Activated CD4-positive, alpha-beta T cell treated with anti-CD3 and anti-CD28 coated beads, Interleukin-2, amount 10 ng/mL, durations not matched to agents 24 days and 14 days (primary cell): ENCODE measurements at regions of chr21 and their contacts with region 1.

Region 1: DNA sequence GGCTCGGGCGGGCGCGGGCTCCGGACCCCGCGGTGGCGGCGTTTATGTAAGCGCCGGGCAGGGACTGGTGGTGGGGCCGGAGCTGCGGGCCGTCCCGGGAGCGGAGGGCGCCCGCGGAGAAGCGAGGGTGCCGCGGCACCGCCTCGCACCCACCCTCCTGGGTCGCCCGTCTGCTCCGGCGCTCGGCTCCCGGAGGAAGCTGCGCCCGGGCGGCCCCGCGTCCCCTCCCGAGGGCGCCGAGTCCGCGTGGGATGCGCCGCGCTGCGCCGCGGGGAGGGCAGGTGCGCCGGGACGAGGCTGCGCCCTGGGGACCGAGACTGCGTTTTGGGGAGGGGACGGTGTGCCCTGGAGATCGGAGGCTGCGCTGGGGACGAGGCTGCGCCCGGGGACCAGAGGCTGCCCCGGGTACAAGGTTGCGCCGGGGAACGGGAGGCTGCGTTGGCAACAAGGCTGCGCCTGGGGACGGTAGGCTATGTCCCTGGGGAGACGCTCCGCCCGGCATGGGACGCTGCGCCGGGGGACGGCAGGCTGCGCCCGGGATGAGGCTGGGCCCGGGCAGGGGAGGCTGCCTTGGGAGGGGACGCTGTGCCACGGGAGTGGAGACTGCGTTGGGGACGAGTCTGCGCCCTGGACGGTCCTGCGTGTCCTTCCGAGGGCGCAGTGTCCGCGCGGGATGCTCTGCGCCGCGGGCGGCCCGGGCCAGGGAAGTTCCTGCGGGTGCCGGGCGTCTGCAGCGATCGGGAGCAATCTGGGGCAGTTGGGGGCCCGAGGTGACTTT is 627 bp downstream of the ADARB1 start:
- DNase-seq: peak; percentile 79
- H3K4me3 Mint-ChIP-seq: peak overlapping the region; percentile 83
- H3K27ac Mint-ChIP-seq: peak overlapping the region; percentile 84
- H3K4me1 Mint-ChIP-seq: peaks cover 47% of the 10 kb centered on the region
- H3K27me3 Mint-ChIP-seq: peaks cover 3% of the 10 kb centered on the region

Region 2: GRCh38 chr21:44939532-44940115 is 135.4 kb before region 1 on chr21 and contains the start of gene SLX9:
- intact Hi-C with region 1: loop called (anchors 5 kb)
- DNase-seq: peak; percentile 95
- H3K4me3 Mint-ChIP-seq: peak within 1 kb of the TSS; percentile 98
- H3K27ac Mint-ChIP-seq: peak within 1 kb of the TSS; percentile 86
- H3K4me1 Mint-ChIP-seq: peaks cover 30% of the 10 kb centered on the region
- H3K27me3 Mint-ChIP-seq: no peaks in the 10 kb centered on the region
- total RNA-seq, gene SLX9: 74.6 and 80.8 TPM in 2 replicates

Region 3: GRCh38 chr21:44989537-44989886 is 85.5 kb before region 1 on chr21:
- intact Hi-C with region 1: no loop called
- DNase-seq: no peak
- H3K4me3 Mint-ChIP-seq: no peak overlapping the region
- H3K27ac Mint-ChIP-seq: no peak overlapping the region
- H3K4me1 Mint-ChIP-seq: no peaks in the 10 kb centered on the region
- H3K27me3 Mint-ChIP-seq: no peaks in the 10 kb centered on the region

Region 4: GRCh38 chr21:45109831-45110492 is 35.0 kb after region 1 on chr21:
- intact Hi-C with region 1: loop called (anchors 1 kb)
- DNase-seq: peak; percentile 79
- H3K4me3 Mint-ChIP-seq: peak overlapping the region; percentile 71
- H3K27ac Mint-ChIP-seq: peak overlapping the region; percentile 46
- H3K4me1 Mint-ChIP-seq: peaks cover 49% of the 10 kb centered on the region
- H3K27me3 Mint-ChIP-seq: no peaks in the 10 kb centered on the region

Region 5: DNA sequence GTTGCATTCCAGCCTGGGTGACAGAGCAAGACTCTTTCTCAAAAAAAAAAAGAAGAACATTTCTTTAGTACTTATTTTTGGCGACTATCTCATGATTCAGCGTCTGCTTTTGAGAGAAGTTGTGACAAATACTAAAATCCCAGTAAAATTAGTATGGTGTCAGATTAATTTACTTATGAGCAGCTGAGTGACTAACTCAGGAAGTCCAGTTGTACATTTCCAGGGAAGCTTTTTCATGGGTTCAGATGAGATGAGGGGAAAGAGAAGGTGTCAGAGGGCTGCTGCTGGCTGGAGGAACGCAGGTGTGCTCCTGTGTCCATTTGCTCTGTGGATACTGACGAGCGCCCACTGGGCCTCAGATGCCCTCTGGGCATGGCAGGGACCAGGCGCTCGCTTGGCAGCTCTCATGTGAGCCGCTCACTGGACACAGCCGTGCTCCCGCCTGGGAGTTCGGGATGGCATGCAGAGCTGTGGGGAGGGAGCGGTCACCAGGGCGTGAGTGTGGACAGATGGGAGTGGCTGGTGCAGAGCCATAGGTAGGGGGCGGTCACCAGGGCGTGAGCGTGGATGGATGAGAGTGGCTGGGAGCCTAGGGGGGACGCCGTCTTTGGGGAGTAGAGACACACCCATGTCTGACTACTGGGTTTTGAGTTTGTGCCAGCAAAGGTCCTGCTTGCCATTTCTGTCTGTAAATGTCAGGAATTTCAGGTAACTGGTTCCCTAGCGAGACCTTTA is 54.3 kb after region 1 on chr21:
- intact Hi-C with region 1: loop called (anchors 5 kb)
- DNase-seq: no peak
- H3K4me3 Mint-ChIP-seq: no peak overlapping the region
- H3K27ac Mint-ChIP-seq: no peak overlapping the region
- H3K4me1 Mint-ChIP-seq: peaks cover 24% of the 10 kb centered on the region
- H3K27me3 Mint-ChIP-seq: no peaks in the 10 kb centered on the region

Region 6: GRCh38 chr21:45228171-45228641 is 153.2 kb after region 1 on chr21:
- intact Hi-C with region 1: loop called (anchors 5 kb)
- DNase-seq: peak; percentile 83
- H3K4me3 Mint-ChIP-seq: no peak overlapping the region
- H3K27ac Mint-ChIP-seq: peak overlapping the region; percentile 3
- H3K4me1 Mint-ChIP-seq: peaks cover 30% of the 10 kb centered on the region
- H3K27me3 Mint-ChIP-seq: peaks cover 8% of the 10 kb centered on the region